ENCODE measurements at regions of chr1 and their contacts with region 1.

Region 1: GRCh38 chr1:8848663-8849386 is 29.7 kb downstream of the ENO1 start:
- DNase-seq: peak; percentile 94 to 97 (median 97)
- H3K4me3 ChIP-seq: no peak overlapping the region
- H3K27ac ChIP-seq: peak overlapping the region in 4 of 5 donors; percentile 39 to 80 (median 61)
- H3K4me1 ChIP-seq: peaks cover 0 to 4% of the 10 kb centered on the region in 2 donors
- H3K27me3 ChIP-seq: no peaks in the 10 kb centered on the region
- CTCF ChIP-seq: peak; percentile 87 to 99 (median 96)
- POLR2A ChIP-seq: peak in 1 of 2 donors; percentile 47

Region 2: DNA sequence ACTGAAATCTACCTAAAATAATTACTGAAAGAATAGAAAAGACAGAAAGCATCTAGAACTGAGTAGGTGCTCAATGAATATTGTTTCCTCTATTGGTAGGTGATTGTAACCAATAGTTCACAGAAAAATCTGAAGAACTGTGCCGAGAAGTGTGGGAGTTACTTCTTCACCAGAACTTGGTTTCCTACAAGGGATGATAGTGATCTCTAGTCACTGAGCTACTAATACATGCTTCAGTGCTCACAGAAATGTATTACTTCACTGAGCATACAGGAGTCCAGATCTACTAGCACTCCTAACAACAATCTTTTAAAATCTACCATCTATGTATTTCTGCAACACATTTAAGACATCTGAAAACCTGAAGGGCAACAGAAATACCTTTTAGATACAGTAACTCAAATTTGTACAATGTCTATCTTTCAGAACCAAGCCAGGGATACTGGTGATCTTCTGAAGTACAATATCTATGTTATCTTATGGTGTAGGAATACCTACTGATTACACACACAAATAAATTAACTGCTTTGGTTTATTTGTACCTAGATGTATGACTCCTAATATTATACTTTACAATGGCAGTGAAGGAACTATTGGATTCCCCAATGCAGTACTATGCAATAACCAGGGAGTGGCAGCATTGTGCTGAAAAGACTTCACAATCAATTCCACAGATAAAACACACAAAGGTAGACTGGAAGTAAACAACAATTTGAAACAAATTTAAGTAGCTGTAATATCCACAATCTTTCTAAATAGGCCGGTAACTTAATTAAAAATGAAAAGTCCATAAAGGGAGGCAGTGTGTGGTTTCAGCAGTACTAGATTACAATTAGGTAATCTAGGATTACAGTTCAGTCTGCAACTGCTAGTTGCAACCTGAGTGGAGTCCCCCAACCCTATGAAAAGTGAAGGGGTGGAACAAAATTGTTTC is 287.9 kb before region 1 on chr1:
- intact Hi-C with region 1: loop called in 1 of 2 experiments (anchors 10 kb)
- DNase-seq: peak in 3 of 7 donors; percentile 44 to 62 (median 44)
- H3K4me3 ChIP-seq: no peak overlapping the region
- H3K27ac ChIP-seq: no peak overlapping the region
- H3K4me1 ChIP-seq: peaks cover 5 to 24% of the 10 kb centered on the region in 2 donors
- H3K27me3 ChIP-seq: no peaks in the 10 kb centered on the region
- CTCF ChIP-seq: peak; percentile 87 to 97 (median 94)
- POLR2A ChIP-seq: no peak

Region 3: DNA sequence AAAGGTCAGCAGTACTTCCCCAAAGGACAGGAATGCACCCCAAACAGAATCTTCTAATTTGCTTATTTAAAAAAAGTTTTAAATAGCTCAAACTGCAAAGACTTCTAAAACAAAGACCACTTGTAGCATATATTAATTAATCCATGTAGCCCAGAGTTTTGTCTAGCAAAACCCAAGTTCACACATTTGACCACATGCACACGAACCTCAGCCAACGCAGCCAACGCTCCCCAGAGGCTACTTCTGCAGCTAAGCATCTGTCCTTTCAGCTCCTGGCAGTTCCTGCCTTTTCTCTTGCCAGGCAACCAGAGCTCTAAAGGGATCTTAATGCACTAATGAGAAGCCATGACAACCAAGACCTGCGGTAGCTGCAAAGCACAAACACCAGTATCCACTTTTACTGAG is 121.0 kb before region 1 on chr1:
- intact Hi-C with region 1: loop called (anchors 10 kb)
- DNase-seq: peak in 1 of 7 donors; percentile 69
- H3K4me3 ChIP-seq: no peak overlapping the region
- H3K27ac ChIP-seq: no peak overlapping the region
- H3K4me1 ChIP-seq: no peaks in the 10 kb centered on the region
- H3K27me3 ChIP-seq: no peaks in the 10 kb centered on the region
- CTCF ChIP-seq: no peak
- POLR2A ChIP-seq: no peak

Region 4: GRCh38 chr1:8739377-8739776 is 109.4 kb before region 1 on chr1:
- intact Hi-C with region 1: loop called in 1 of 2 experiments (anchors 10 kb)
- DNase-seq: no peak
- H3K4me3 ChIP-seq: no peak overlapping the region
- H3K27ac ChIP-seq: no peak overlapping the region
- H3K4me1 ChIP-seq: peaks cover 11% of the 10 kb centered on the region in 2 donors
- H3K27me3 ChIP-seq: no peaks in the 10 kb centered on the region
- CTCF ChIP-seq: no peak
- POLR2A ChIP-seq: no peak

Region 5: DNA sequence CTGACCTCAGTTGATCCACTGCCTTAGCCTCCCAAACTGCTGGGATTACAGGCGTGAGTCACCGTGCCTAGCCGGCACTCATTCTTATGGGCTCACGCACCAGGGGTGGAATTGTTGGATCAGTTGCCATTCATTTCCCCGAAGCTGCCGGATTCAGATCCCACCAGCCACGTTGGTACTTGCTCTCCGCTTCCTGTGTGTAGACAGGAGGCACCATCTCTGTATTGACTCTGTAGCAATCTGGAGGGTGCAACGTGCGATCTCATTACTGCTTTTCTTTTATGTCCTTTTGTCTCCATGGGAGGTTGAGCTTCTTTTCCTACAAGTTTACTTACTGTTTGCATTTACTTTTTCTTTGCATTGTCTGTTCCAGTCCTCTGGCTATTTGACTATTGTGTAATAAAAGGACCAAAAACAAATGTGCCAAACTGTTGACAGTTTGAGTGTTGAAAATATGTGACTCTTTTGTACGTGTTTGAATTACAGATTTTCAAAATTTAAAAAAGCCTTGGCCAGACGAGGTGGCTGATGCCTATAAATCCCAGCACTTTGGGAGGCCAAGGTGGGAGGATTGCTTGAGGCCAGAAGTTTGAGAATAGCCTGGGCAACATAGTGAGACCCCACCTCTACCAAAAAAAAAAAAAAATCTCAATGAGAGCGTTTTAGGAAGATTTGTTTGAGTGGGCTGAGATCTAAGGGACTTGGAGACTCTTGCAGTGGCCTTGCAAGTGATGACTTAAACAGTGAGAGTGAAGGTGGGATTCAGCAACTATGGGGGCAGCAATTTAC is 482.9 kb after region 1 on chr1:
- intact Hi-C with region 1: no loop called
- DNase-seq: no peak
- H3K4me3 ChIP-seq: no peak overlapping the region
- H3K27ac ChIP-seq: no peak overlapping the region
- H3K4me1 ChIP-seq: peaks cover 0 to 10% of the 10 kb centered on the region in 2 donors
- H3K27me3 ChIP-seq: no peaks in the 10 kb centered on the region
- CTCF ChIP-seq: no peak
- POLR2A ChIP-seq: no peak

Measured in adrenal gland (tissue), 19 donors.